ENCODE measurements at regions of chr1 and their contacts with region 1.

Region 1: GRCh38 chr1:89739013-89739843 is 81.6 kb upstream of the LRRC8D start:
- DNase-seq: no peak
- ATAC-seq: peak; percentile 19 to 50
- H3K4me3 ChIP-seq: no peak overlapping the region
- H3K27ac ChIP-seq: no peak overlapping the region
- H3K4me1 ChIP-seq: no peaks in the 10 kb centered on the region
- H3K27me3 ChIP-seq: no peaks in the 10 kb centered on the region

Region 2: GRCh38 chr1:89757532-89757931 is 18.3 kb after region 1 on chr1:
- intact Hi-C with region 1: loop called in 1 of 4 experiments (anchors 2 kb)
- DNase-seq: peak; percentile 43 to 73 (median 68)
- ATAC-seq: peak; percentile 71 to 80
- H3K4me3 ChIP-seq: no peak overlapping the region
- H3K27ac ChIP-seq: peak overlapping the region; percentile 57
- H3K4me1 ChIP-seq: peaks cover 9% of the 10 kb centered on the region
- H3K27me3 ChIP-seq: no peaks in the 10 kb centered on the region

Region 3: GRCh38 chr1:89804642-89805237 is 65.5 kb after region 1 on chr1:
- intact Hi-C with region 1: no loop called
- DNase-seq: peak; percentile 78 to 90 (median 84)
- ATAC-seq: peak; percentile 86 to 89
- H3K4me3 ChIP-seq: no peak overlapping the region
- H3K27ac ChIP-seq: no peak overlapping the region
- H3K4me1 ChIP-seq: no peaks in the 10 kb centered on the region
- H3K27me3 ChIP-seq: no peaks in the 10 kb centered on the region